ENCODE measurements at regions of chr19 and their contacts with region 1.

Region 1: GRCh38 chr19:796692-797527 is at the start of gene PTBP1:
- DNase-seq: peak; percentile 98
- ATAC-seq: peak; percentile 71
- H3K4me3 ChIP-seq: peak within 1 kb of the TSS; percentile 88
- H3K27ac ChIP-seq: peak within 1 kb of the TSS; percentile 74
- H3K4me1 ChIP-seq: peaks cover 26% of the 10 kb centered on the region
- H3K27me3 ChIP-seq: no peaks in the 10 kb centered on the region
- CTCF ChIP-seq: no peak
- total RNA-seq, gene PTBP1: 395 and 412 TPM in 2 replicates

Region 2: DNA sequence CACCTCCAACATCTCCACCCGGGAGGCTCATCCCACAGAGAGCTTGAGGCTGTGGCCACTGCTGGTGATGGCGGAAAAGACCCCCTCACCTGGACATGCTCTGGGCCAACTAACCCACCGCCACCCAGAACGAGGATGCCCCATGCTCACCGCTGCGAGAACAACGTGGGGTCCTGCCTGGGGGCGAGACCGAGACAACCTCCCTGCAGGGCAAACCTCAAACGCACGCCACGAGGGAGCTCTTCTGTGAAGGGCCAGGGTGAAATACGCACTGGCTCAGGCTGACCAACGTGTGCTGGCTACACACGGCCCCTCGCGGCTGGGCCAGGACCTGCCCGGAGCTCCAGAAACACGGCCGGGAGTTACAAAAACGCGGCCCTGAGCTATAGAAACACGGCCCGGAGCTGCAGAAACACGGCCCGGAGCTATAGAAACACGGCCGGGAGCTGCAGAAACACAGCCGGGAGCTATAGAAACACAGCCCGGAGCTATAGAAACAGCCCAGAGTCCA is 486.7 kb before region 1 on chr19:
- CTCF ChIA-PET with region 1: no interaction called
- POLR2A ChIA-PET with region 1: no interaction called
- intact Hi-C with region 1: no loop called
- DNase-seq: no peak
- ATAC-seq: no peak
- H3K4me3 ChIP-seq: no peak overlapping the region
- H3K27ac ChIP-seq: no peak overlapping the region
- H3K4me1 ChIP-seq: no peaks in the 10 kb centered on the region
- H3K27me3 ChIP-seq: no peaks in the 10 kb centered on the region
- CTCF ChIP-seq: no peak

Region 3: DNA sequence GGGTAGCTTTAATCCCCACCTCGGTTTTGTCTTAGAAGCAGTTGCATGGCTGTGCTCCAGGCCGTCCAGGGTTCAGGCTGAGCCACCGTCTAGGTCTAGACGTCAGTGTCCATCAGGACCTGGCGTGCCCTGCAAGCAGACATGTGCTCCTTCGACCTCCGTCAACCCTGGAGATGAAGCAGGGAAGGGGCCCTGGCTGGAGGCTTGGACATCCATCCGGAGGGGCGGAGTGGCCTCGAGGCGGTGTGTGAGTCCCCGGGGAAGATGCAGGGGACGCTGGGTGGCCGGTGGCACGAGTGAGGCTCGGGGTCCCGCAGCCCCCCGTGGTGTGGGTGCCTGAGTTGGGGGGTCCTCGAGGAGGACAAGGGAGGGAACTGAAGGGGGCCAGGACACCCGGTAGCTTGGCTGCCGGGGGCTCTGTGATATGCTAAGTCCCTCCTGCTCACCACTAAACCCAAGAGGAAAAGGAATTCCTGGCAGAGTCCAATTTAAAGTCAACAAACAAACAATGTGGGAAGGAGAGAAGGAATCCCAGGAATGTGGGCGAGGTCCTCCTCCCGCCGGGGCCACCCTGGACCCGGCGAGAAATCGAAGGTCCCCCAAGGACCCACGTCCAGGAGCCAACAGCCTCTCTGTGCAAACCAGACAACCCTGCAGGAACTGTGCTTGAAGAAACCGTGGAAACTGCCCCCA is 14.6 kb before region 1 on chr19:
- CTCF ChIA-PET with region 1: no interaction called
- POLR2A ChIA-PET with region 1: no interaction called
- intact Hi-C with region 1: loop called (anchors 2 kb)
- DNase-seq: peak; percentile 86
- ATAC-seq: peak; percentile 80
- H3K4me3 ChIP-seq: peak overlapping the region; percentile 75
- H3K27ac ChIP-seq: peak overlapping the region; percentile 86
- H3K4me1 ChIP-seq: peaks cover 12% of the 10 kb centered on the region; the same call in 1 of the 2 replicates
- H3K27me3 ChIP-seq: no peaks in the 10 kb centered on the region
- CTCF ChIP-seq: no peak

Measured in PC-3 (cell line).